HepG2 (cell line): ENCODE measurements at regions of chr10 and their contacts with region 1.

Region 1: DNA sequence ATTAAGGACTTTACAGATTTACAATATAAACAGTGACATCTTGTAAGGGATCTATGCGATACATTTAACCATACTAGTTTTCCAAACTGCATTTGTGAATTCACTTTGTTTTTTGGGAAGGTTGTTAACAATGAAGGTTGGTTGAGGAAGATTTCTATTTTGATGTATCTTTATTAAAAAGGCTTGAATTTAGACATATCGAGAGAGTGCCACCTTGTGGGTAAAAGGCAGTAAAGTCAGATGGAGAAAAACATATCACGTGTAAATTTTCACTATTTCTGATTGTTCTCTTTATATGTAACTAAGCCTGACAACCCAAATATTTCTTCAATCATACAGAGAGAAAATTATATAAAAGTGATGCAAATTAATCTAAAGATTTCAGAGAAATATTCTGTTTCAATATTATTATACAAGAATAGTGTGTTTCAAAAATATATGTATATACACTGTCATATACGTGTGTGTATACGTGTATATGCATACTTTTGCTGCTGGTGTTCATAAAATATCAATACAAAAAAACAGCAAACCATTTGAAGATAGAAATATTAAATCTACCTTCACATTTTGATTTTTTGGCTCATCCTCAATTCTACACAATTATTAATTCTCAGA is 988.6 kb downstream of the SORCS1 start:
- DNase-seq: no peak
- ATAC-seq: no peak
- H3K4me3 ChIP-seq: no peak overlapping the region
- H3K27ac ChIP-seq: no peak overlapping the region
- H3K4me1 ChIP-seq: no peaks in the 10 kb centered on the region
- H3K27me3 ChIP-seq: no peaks in the 10 kb centered on the region
- CTCF ChIP-seq: 0 out of 2 replicates have a peak, but pooled peaks have one; percentile 7
- EP300 ChIP-seq: no peak
- POLR2A ChIP-seq: no peak
- RAD21 ChIP-seq: no peak

Region 2: DNA sequence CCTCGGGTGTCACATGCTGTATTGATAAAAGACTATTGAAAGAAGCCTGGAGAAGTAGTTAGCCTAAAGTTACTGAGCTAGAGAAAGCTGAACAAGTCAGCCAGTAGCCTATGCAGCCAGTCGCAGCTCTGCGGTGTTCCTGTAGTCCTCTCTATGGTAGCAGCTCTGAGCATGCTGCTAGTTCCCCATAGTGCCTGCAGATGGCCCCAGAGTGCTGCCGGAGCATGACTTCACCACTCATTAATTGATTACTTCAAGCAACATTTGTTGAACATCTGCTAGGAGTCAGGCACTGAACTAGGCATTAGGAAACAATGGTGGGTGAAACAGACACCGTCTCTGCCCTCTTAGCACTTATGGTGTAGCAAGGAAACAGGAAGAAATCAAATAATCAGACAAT is 1112.1 kb before region 1 on chr10:
- CTCF ChIA-PET with region 1: no interaction called
- POLR2A ChIA-PET with region 1: no interaction called
- in situ Hi-C with region 1: no loop called
- intact Hi-C with region 1: loop called (anchors 5 kb)
- DNase-seq: peak; percentile 5
- ATAC-seq: peak; percentile 82
- H3K4me3 ChIP-seq: no peak overlapping the region
- H3K27ac ChIP-seq: no peak overlapping the region
- H3K4me1 ChIP-seq: no peaks in the 10 kb centered on the region
- H3K27me3 ChIP-seq: no peaks in the 10 kb centered on the region
- CTCF ChIP-seq: peak; percentile 66
- EP300 ChIP-seq: no peak
- POLR2A ChIP-seq: no peak
- RAD21 ChIP-seq: no peak

Region 3: DNA sequence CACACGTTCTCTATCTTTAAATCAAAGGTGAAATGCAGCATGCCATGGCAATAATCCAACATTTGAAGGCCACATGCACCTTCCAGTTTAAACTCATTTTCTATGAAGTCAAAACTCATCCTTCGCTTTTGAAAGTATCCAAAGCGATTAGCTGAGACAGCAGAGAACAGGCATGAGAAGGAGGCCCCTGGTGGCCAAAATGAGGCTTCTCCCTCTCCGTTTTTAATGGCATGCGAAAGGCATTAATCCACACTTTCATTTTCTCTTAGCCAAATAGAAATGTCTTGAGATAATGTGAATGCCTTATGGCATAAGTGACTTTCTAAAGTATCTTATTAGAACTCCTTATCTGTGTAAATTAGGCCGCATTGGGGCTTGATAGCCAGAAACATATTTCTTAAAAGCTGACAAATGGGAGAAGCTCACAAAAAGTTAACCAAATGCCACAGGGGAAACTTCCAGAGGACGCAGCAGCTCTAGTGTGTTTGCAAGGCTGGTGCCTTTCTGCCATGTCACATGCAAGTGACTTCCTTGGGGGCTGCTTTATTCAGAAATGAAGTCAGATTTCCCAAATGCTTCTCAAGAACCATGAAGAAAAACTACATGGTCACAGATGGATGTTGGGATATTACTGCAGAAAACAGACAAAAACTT is 200.9 kb before region 1 on chr10:
- CTCF ChIA-PET with region 1: no interaction called
- POLR2A ChIA-PET with region 1: no interaction called
- in situ Hi-C with region 1: no loop called
- intact Hi-C with region 1: no loop called
- DNase-seq: no peak
- ATAC-seq: peak; percentile 49; the same call in 1 of the 3 replicates
- H3K4me3 ChIP-seq: no peak overlapping the region
- H3K27ac ChIP-seq: no peak overlapping the region
- H3K4me1 ChIP-seq: no peaks in the 10 kb centered on the region
- H3K27me3 ChIP-seq: no peaks in the 10 kb centered on the region
- CTCF ChIP-seq: no peak
- EP300 ChIP-seq: no peak
- POLR2A ChIP-seq: no peak
- RAD21 ChIP-seq: no peak

Region 4: DNA sequence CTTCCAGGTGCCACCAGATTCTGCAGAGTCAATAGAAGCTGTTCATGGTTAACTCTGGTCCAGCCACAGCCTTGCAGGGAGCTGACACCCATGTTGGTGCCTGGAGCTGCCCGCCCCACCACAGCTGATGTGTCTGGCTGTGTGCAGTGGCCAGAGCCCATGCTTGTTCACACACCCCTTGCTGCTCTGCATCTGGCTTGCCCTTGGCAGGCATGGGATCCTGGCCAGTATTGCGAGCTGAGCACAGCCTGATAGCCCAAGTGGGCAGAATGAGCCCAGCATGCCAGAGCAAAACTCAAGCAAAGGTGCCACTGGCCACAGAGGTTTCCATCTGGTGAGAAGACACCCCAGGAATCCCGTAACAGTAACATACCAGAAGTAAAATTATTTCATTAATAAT is 145.0 kb after region 1 on chr10:
- CTCF ChIA-PET with region 1: no interaction called
- POLR2A ChIA-PET with region 1: no interaction called
- in situ Hi-C with region 1: no loop called
- intact Hi-C with region 1: no loop called
- DNase-seq: no peak
- ATAC-seq: no peak
- H3K4me3 ChIP-seq: no peak overlapping the region
- H3K27ac ChIP-seq: no peak overlapping the region
- H3K4me1 ChIP-seq: no peaks in the 10 kb centered on the region
- H3K27me3 ChIP-seq: no peaks in the 10 kb centered on the region
- CTCF ChIP-seq: no peak
- EP300 ChIP-seq: no peak
- POLR2A ChIP-seq: no peak
- RAD21 ChIP-seq: no peak